ENCODE measurements at regions of chr7 and their contacts with region 1.

Region 1: DNA sequence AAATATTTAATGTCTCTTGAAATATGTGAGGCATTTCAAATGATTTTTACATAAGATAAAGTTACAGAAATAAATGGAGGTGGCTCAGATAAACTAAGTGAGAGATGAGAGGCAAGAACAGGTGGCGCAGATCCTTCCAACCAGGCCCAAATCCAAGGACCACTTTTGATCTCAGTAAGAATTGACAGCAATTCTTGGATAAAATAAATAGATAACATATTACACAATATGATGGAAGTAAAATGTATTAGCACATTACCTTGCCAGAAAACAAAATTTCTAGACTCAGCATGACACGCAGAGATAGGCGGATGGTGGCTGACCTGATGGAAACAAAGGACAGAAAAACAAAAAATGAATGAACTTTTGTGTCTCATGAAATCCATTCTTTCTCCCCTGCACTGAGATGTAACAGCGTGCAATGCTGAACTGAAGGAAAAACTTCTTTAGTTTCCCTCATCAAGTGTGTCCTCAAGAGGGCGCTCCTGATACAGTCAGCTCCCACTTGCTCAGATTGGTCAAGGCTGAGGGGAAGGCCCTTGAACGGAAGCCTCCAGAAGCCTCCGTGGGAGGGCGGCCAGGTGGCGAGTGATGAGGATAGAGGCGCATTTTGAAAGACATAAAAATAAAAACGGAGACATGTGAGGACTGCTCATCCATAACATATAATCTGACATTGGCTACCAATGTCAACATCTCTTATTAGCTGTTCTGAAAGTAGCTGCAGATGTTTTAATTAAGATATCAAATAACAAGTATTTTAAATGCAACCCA is 62.8 kb upstream of the GSDME start:
- DNase-seq: peak; percentile 73 to 80 (median 77)
- H3K4me3 ChIP-seq: peak overlapping the region in 1 of 7 experiments; percentile 12
- H3K27ac ChIP-seq: no peak overlapping the region
- H3K4me1 ChIP-seq: peaks cover 6 to 26% (median 24%) of the 10 kb centered on the region in 4 experiments
- H3K27me3 ChIP-seq: no peaks in the 10 kb centered on the region

Region 2: GRCh38 chr7:24290004-24290641 is 530.0 kb before region 1 on chr7:
- CTCF ChIA-PET with region 1: no interaction called
- POLR2A ChIA-PET with region 1: no interaction called
- DNase-seq: peak; percentile 76 to 82 (median 82)
- H3K4me3 ChIP-seq: no peak overlapping the region
- H3K27ac ChIP-seq: no peak overlapping the region
- H3K4me1 ChIP-seq: peaks cover 0 to 6% (median 2%) of the 10 kb centered on the region in 4 experiments
- H3K27me3 ChIP-seq: peaks cover 10 to 51% (median 28%) of the 10 kb centered on the region in 5 experiments

Region 3: GRCh38 chr7:24836084-24836483 is 16.0 kb after region 1 on chr7:
- CTCF ChIA-PET with region 1: interaction called, 19 read pairs
- POLR2A ChIA-PET with region 1: no interaction called
- DNase-seq: peak; percentile 36 to 91 (median 87)
- H3K4me3 ChIP-seq: peak overlapping the region in 2 of 7 experiments; percentile 17 to 37
- H3K27ac ChIP-seq: peak overlapping the region in 1 of 2 experiments; percentile 45
- H3K4me1 ChIP-seq: peaks cover 21 to 64% (median 50%) of the 10 kb centered on the region in 4 experiments
- H3K27me3 ChIP-seq: no peaks in the 10 kb centered on the region

Region 4: GRCh38 chr7:24979863-24980533 is 159.9 kb after region 1 on chr7 and contains the start of gene OSBPL3:
- CTCF ChIA-PET with region 1: interaction called, 42 read pairs
- POLR2A ChIA-PET with region 1: interaction called, 4 read pairs
- DNase-seq: peak; percentile 93 to 97 (median 97)
- H3K4me3 ChIP-seq: peak within 1 kb of the TSS; percentile 78 to 93 (median 84)
- H3K27ac ChIP-seq: peak within 1 kb of the TSS in 1 of 2 experiments; percentile 79
- H3K4me1 ChIP-seq: peaks cover 0 to 37% (median 28%) of the 10 kb centered on the region in 4 experiments
- H3K27me3 ChIP-seq: peaks cover 0 to 4% (median 0%) of the 10 kb centered on the region in 5 experiments

Region 5: DNA sequence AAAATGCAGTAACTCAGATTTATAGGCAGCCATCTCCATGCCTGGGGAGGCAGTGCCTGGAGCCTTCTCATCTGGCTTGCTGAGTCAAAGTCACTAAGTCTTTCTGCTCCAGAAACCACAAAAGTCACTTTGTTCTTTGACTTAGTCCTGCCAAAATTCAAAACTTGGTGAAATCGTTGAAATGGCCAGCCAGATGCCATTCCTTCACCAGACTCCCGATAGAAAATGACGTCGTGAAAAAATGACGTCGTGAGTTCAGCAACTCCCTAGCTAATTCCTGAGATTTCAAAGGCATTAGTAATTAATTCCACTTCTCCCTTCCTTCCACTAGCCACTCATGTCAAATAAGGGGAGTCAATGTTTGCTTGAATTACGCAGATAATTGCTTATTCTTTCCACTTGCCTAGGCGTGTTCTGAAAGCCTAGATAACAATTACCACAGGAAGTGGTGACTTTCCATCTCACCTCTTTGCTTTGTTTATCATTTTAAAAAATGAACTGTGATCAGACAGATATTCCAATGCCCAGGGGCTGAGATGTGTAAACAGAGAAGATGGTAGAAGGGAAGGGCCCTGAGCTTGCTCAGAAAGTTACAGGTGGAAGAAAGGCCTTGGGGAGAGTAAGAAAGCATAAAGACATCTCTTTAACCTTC is 208.4 kb after region 1 on chr7:
- CTCF ChIA-PET with region 1: interaction called, 11 read pairs
- POLR2A ChIA-PET with region 1: no interaction called
- DNase-seq: peak; percentile 11 to 16 (median 15)
- H3K4me3 ChIP-seq: no peak overlapping the region
- H3K27ac ChIP-seq: no peak overlapping the region
- H3K4me1 ChIP-seq: peaks cover 0 to 4% (median 0%) of the 10 kb centered on the region in 4 experiments
- H3K27me3 ChIP-seq: no peaks in the 10 kb centered on the region

Region 6: GRCh38 chr7:25069900-25070443 is 249.9 kb after region 1 on chr7:
- CTCF ChIA-PET with region 1: interaction called, 16 read pairs
- POLR2A ChIA-PET with region 1: interaction called, 6 read pairs
- DNase-seq: peak; percentile 78 to 86 (median 82)
- H3K4me3 ChIP-seq: no peak overlapping the region
- H3K27ac ChIP-seq: no peak overlapping the region
- H3K4me1 ChIP-seq: peaks cover 0 to 13% (median 5%) of the 10 kb centered on the region in 4 experiments
- H3K27me3 ChIP-seq: no peaks in the 10 kb centered on the region

Region 7: DNA sequence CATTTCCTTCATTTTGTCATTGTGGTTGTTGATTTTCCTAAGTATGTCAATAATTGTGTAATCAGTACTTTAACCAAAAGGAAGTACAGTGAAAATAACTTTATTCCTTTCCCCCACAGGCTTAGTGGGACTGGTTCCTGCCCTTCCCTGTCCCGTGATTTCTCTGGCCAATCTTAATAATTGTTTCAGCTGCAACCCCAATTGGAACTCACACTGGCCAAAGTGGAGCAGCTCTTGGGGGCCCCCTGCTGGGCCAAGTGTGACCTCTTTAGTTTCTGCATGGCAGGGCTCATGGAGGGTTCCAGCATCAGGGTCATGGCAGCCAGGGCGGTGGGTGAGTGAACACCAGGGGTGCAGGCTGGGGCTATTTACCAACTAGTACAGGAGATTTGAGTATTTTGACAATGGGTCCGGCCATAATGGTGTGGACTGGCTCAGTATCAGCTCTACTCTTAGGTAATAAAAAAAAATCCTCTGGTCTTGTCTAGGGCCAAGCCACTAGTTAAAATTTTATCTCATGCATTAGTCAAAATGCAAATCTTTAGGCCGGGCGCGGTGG is 273.2 kb after region 1 on chr7:
- CTCF ChIA-PET with region 1: interaction called, 26 read pairs
- POLR2A ChIA-PET with region 1: interaction called, 3 read pairs
- DNase-seq: peak; percentile 72 to 83 (median 79)
- H3K4me3 ChIP-seq: no peak overlapping the region
- H3K27ac ChIP-seq: no peak overlapping the region
- H3K4me1 ChIP-seq: peaks cover 0 to 3% (median 1%) of the 10 kb centered on the region in 4 experiments
- H3K27me3 ChIP-seq: no peaks in the 10 kb centered on the region

Region 8: DNA sequence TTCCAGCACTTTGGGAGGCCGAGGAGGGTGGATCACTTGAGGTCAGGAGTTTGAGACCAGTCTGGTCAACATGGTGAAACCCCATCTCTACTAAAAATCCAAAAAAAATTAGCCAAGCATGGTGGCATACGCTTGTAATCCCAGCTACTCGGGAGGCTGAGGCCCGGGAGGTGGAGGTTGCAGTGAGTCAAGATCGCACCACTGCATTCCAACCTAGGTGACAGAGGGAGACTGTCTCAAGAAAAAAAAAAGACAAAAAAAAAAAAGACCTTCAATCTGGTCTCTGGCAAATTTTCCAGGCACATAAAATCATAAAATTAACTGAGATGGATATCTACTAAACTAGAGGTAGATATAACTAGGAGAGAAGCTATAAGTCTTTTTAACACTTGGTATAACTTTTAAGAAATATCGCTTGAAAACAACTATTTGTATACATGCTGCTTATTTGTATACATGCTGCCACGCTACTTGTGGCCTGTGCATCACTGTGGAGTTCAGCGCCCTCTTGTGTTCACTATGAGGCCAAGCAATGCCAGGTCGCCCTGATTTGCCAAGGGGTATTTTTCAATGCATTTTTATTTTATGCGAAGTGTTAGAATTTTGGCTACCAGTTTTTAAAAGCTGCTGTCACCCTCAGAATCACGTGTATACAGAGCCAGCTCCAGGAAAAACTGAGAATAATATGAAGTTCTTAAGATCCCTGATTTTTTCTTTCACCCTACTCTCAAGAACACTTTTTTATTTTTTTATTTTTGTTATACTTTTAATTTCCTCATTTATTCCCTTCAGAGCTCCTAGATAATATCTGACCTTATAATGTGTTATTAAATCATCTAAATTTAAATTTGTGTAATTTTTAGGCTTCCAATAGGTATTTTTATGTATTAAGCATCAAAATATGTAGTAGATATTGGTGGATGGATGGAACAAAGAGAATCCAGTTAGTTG is 278.3 kb after region 1 on chr7:
- CTCF ChIA-PET with region 1: interaction called, 26 read pairs
- POLR2A ChIA-PET with region 1: interaction called, 3 read pairs
- DNase-seq: peak; percentile 73 to 89 (median 87)
- H3K4me3 ChIP-seq: no peak overlapping the region
- H3K27ac ChIP-seq: no peak overlapping the region
- H3K4me1 ChIP-seq: peaks cover 0 to 3% (median 1%) of the 10 kb centered on the region in 4 experiments
- H3K27me3 ChIP-seq: no peaks in the 10 kb centered on the region

Measured in common myeloid progenitor, CD34-positive (primary cell).